HEK293 (cell line): ENCODE measurements at regions of chr6 and their contacts with region 1.

Region 1: DNA sequence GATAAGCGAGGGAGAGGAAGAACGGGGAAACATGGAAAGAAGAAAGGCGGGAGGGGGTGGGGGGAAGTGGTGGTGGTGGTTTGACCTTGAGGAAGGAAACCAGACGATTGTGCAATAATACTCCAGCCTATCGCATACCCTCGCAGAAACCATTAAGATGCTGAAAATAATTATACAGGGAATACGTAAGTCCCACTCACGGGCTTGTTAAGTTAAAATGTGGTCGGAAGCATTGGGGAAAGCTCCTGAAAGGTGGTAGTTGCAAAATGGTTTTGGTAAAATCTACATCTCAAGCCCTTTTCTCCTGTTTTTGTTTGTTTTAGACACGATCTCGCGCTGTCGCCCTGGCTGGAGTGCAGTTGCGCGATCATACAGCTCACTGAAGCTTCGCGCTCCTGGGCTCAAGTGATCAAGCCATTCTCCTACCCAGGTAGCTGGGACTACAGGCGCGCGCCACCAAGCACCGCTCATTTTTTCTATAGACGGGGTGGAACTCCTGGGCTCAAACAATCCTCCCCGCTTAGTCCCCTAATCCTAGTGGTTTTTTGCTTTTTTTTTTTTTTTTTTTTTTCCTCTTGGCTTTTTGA is 128.9 kb upstream of the ZNF184 start:
- H3K4me3 ChIP-seq: peak overlapping the region; percentile 55
- H3K27ac ChIP-seq: peak overlapping the region; percentile 32; the same call in 1 of the 2 replicates
- H3K4me1 ChIP-seq: no peaks in the 10 kb centered on the region
- CTCF ChIP-seq: no peak

Region 2: GRCh38 chr6:27582928-27583725 is 18.6 kb before region 1 on chr6:
- CTCF ChIA-PET with region 1: no interaction called
- POLR2A ChIA-PET with region 1: no interaction called
- H3K4me3 ChIP-seq: no peak overlapping the region
- H3K27ac ChIP-seq: no peak overlapping the region
- H3K4me1 ChIP-seq: no peaks in the 10 kb centered on the region
- CTCF ChIP-seq: no peak

Region 3: DNA sequence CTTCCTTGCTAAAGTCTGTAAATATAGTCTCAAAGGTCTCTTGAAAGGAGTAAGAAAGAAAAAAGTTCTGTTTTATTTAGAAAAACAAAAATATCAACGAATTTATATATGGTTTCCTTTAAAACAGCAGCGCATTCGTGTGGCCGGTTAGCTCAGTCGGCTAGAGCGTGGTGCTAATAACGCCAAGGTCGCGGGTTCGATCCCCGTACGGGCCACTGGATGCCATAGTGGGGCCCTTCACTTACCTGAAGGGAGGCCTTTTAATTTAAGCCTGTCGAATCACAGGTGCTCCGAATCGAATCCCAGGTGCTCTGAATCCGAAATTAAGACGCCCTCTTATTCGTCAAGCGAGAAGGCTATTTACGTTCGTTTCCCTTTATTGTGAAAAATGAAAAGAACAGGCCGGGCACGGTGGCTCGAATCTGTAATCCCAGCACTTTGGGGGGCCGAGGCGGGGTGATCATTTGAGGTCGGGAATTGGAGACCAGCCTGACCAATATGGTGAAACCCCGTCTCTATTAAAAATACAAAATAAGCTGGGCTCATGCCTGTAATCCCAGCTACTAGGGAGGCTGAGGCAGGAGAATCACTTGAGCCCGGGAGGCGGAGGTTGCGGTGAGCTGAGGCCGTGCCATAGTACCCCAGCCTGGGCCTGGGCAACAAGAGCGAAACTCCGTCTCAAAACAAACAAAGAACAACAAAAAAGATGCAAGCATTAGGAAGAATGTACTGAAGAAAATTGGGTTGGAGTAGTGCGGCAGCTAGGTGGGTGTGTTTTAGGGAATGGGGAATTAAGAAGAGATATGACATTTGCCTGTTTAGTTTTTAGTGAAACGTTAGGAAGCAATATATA is 66.9 kb after region 1 on chr6:
- CTCF ChIA-PET with region 1: no interaction called
- POLR2A ChIA-PET with region 1: no interaction called
- H3K4me3 ChIP-seq: peak overlapping the region; percentile 52
- H3K27ac ChIP-seq: no peak overlapping the region
- H3K4me1 ChIP-seq: no peaks in the 10 kb centered on the region
- CTCF ChIP-seq: no peak

Region 4: DNA sequence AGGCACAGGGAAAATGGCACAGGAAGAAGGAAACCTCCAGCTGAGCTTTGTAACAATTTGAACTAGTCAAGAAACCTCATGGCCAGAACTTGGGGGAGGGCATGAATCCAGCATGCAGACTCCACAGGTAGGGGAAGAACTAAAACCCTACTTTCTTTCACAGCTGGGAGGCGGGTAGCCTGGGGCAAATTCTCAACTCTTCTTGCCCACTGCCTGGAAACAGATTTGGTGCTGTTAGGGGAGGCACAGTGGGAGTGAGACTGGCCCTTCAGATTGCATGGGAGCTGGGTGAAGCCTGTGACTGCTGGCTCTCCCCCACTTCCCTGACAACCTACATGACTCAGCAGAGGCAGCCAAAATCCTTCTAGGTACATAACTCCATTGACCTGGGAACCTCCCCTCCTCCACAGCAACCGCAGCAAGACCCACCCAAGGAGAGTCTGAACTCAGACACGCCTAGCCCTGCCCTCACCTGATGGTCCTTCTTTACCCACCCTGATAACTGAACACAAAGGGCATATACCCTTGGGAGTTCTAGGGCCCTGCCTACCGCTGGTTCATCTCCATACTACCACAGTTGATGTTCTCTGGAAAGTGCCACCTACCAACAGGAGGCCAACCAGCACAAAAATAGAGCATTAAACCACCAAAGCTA is 1359.2 kb after region 1 on chr6:
- CTCF ChIA-PET with region 1: no interaction called
- POLR2A ChIA-PET with region 1: interaction called, 11 read pairs
- H3K4me3 ChIP-seq: no peak overlapping the region
- H3K27ac ChIP-seq: no peak overlapping the region
- H3K4me1 ChIP-seq: no peaks in the 10 kb centered on the region
- CTCF ChIP-seq: no peak